Sigmoid colon (tissue), 7 donors: ENCODE measurements at regions of chr10 and their contacts with region 1.

Region 1: GRCh38 chr10:7085913-7086589 is 324.8 kb downstream of the SFMBT2 start:
- DNase-seq: no peak
- H3K4me3 ChIP-seq: no peak overlapping the region
- H3K27ac ChIP-seq: no peak overlapping the region
- H3K4me1 ChIP-seq: peaks cover 0 to 21% (median 12%) of the 10 kb centered on the region in 4 donors
- H3K27me3 ChIP-seq: peaks cover 0 to 27% (median 6%) of the 10 kb centered on the region in 3 donors
- CTCF ChIP-seq: no peak
- EP300 ChIP-seq: no peak
- POLR2A ChIP-seq: no peak

Region 2: GRCh38 chr10:6912424-6912823 is 173.6 kb before region 1 on chr10:
- intact Hi-C with region 1: loop called (anchors 5 kb)
- DNase-seq: no peak
- H3K4me3 ChIP-seq: no peak overlapping the region
- H3K27ac ChIP-seq: peak overlapping the region in 3 of 4 donors; percentile 25 to 64 (median 63)
- H3K4me1 ChIP-seq: peaks cover 0 to 21% (median 15%) of the 10 kb centered on the region in 4 donors
- H3K27me3 ChIP-seq: no peaks in the 10 kb centered on the region
- CTCF ChIP-seq: no peak
- EP300 ChIP-seq: peak in 2 of 4 donors; percentile 20 to 27
- POLR2A ChIP-seq: no peak

Region 3: GRCh38 chr10:7161484-7162250 is 75.6 kb after region 1 on chr10:
- intact Hi-C with region 1: no loop called
- DNase-seq: peak; percentile 71
- H3K4me3 ChIP-seq: no peak overlapping the region
- H3K27ac ChIP-seq: no peak overlapping the region
- H3K4me1 ChIP-seq: no peaks in the 10 kb centered on the region
- H3K27me3 ChIP-seq: no peaks in the 10 kb centered on the region
- CTCF ChIP-seq: no peak
- EP300 ChIP-seq: no peak
- POLR2A ChIP-seq: no peak